ENCODE measurements at regions of chr21 and their contacts with region 1.

Region 1: DNA sequence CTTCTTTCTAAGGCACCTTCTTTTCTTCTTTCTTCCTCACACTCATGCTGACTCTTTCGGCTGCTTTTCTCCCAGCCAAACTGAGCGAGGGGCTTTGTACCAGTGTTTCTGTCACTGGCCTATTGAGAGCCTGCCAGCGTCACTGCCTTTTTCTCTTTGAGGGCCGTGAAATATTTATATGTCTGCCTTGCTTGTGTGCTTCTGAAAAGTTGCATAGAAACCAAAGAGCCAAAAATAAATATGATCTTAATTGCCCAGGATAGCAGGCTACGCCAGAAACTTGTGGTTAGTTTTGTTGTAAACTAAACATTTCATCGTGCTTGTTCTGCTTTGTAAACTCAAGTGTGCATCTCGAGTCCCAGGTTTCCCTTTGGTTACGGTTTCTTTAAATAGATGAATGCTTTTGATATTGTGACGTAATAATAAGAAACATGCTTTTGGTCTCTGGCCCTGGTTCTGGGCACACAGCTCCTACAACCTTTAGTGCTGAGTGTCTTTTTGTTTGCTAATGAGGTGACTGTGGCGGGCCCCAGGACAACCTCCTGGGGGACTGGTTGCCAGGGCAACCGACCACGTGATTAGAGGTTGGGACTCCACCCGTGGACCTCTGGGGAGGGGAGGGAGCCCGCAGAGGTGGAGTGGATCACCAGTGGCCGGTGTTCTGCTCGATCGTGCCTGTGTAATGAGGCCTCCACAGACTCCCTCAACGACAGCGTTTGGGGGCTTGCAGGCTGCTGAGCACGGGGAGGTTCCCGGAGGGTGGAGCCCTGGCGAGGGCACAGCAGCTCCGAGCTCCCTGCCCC is 10.9 kb downstream of the SLC37A1 start:
- DNase-seq: peak; percentile 69 to 71
- ATAC-seq: peak; percentile 73 to 83 (median 78)
- H3K4me3 ChIP-seq: peak overlapping the region; percentile 7
- H3K4me3 Mint-ChIP-seq: peak overlapping the region; percentile 89
- H3K27ac ChIP-seq: peak overlapping the region; percentile 85
- H3K27ac Mint-ChIP-seq: peak overlapping the region; percentile 91 to 94
- H3K4me1 ChIP-seq: peaks cover 34% of the 10 kb centered on the region
- H3K4me1 Mint-ChIP-seq: peaks cover 33 to 46% of the 10 kb centered on the region in 2 donors
- H3K27me3 ChIP-seq: no peaks in the 10 kb centered on the region
- H3K27me3 Mint-ChIP-seq: no peaks in the 10 kb centered on the region
- CTCF ChIP-seq: no peak

Region 2: GRCh38 chr21:42337830-42338728 is 186.5 kb before region 1 on chr21:
- intact Hi-C with region 1: loop called (anchors 10 kb)
- DNase-seq: peak; percentile 71 to 94
- ATAC-seq: peak; percentile 83 to 100 (median 99)
- H3K4me3 ChIP-seq: no peak overlapping the region
- H3K4me3 Mint-ChIP-seq: no peak overlapping the region
- H3K27ac ChIP-seq: no peak overlapping the region
- H3K27ac Mint-ChIP-seq: no peak overlapping the region
- H3K4me1 ChIP-seq: peaks cover 8% of the 10 kb centered on the region
- H3K4me1 Mint-ChIP-seq: peaks cover 6 to 8% of the 10 kb centered on the region in 2 donors
- H3K27me3 ChIP-seq: peaks cover 6% of the 10 kb centered on the region
- H3K27me3 Mint-ChIP-seq: peaks cover 19 to 58% of the 10 kb centered on the region in 2 donors
- CTCF ChIP-seq: peak; percentile 70

Region 3: DNA sequence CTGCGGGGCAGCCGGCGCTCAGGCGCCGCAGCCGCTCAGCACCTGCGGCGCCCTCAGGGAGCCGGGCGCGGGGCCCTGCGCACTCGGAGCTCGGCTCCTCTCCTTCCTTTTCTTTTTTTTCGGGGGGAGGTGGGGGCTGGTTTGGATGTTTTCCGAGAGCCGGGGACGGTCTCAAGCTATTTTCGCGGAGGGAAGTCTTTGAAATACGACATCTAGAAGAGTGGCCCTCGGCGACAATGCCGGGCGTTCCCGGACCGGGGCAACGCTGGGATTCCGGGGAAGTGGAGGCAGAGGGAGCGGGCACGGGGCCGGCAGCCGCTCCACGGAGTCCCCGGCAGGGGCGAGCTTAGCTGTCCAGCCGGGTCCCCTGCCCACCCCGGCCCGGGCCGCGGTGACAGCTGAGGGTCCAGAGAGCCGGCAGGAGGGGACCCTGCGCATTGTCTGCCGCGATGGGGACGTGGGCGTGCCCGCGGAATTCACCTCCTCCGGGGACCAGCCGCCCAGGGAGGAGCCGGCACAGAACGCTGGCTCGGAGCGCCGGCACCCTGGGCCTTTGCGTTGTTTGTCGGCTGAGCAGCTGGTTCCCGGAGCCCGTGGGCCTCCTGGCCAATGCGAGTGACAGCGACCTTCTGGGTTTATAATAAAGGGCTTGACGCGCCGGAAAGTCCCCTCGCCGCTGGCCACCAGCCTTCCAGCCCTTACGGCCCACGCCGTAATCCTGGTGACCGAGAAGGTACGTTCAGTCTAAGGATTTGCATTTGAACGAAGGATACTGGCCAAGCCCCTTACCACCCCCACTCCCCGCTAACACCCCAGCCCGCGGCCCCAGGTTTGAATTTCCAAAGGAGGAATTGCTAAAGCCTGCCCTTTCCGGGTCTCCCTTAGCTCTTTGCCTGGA is 10.3 kb before region 1 on chr21:
- intact Hi-C with region 1: loop called (anchors 1 kb)
- DNase-seq: peak; percentile 61 to 79
- ATAC-seq: peak; percentile 73 to 78 (median 75)
- H3K4me3 ChIP-seq: peak overlapping the region; percentile 59
- H3K4me3 Mint-ChIP-seq: peak overlapping the region; percentile 82
- H3K27ac ChIP-seq: peak overlapping the region; percentile 71
- H3K27ac Mint-ChIP-seq: peak overlapping the region; percentile 36 to 81
- H3K4me1 ChIP-seq: peaks cover 13% of the 10 kb centered on the region
- H3K4me1 Mint-ChIP-seq: peaks cover 20 to 31% of the 10 kb centered on the region in 2 donors
- H3K27me3 ChIP-seq: no peaks in the 10 kb centered on the region
- H3K27me3 Mint-ChIP-seq: no peaks in the 10 kb centered on the region
- CTCF ChIP-seq: no peak

Region 4: GRCh38 chr21:43025636-43026307 is 501.2 kb after region 1 on chr21:
- intact Hi-C with region 1: no loop called
- DNase-seq: no peak
- ATAC-seq: no peak
- H3K4me3 ChIP-seq: no peak overlapping the region
- H3K4me3 Mint-ChIP-seq: no peak overlapping the region
- H3K27ac ChIP-seq: no peak overlapping the region
- H3K27ac Mint-ChIP-seq: no peak overlapping the region
- H3K4me1 ChIP-seq: no peaks in the 10 kb centered on the region
- H3K4me1 Mint-ChIP-seq: no peaks in the 10 kb centered on the region
- H3K27me3 ChIP-seq: no peaks in the 10 kb centered on the region
- H3K27me3 Mint-ChIP-seq: no peaks in the 10 kb centered on the region
- CTCF ChIP-seq: no peak

Measured in natural killer cell (primary cell).